ENCODE measurements at regions of chr12 and their contacts with region 1.

Region 1: GRCh38 chr12:110124184-110124995 is at the start of gene IFT81:
- DNase-seq: peak; percentile 96
- ATAC-seq: peak; percentile 94
- H3K4me3 ChIP-seq: peak within 1 kb of the TSS; percentile 75 to 98 (median 96)
- H3K4me3 Mint-ChIP-seq: peak within 1 kb of the TSS; percentile 94
- H3K27ac ChIP-seq: peak within 1 kb of the TSS; percentile 25 to 92
- H3K27ac Mint-ChIP-seq: peak within 1 kb of the TSS; percentile 92
- H3K4me1 ChIP-seq: peaks cover 7 to 8% of the 10 kb centered on the region in 2 donors
- H3K4me1 Mint-ChIP-seq: peaks cover 9% of the 10 kb centered on the region
- H3K27me3 ChIP-seq: no peaks in the 10 kb centered on the region
- H3K27me3 Mint-ChIP-seq: no peaks in the 10 kb centered on the region
- CTCF ChIP-seq: no peak
- total RNA-seq, gene IFT81: 6.0 and 6.8 TPM in 2 replicates

Region 2: DNA sequence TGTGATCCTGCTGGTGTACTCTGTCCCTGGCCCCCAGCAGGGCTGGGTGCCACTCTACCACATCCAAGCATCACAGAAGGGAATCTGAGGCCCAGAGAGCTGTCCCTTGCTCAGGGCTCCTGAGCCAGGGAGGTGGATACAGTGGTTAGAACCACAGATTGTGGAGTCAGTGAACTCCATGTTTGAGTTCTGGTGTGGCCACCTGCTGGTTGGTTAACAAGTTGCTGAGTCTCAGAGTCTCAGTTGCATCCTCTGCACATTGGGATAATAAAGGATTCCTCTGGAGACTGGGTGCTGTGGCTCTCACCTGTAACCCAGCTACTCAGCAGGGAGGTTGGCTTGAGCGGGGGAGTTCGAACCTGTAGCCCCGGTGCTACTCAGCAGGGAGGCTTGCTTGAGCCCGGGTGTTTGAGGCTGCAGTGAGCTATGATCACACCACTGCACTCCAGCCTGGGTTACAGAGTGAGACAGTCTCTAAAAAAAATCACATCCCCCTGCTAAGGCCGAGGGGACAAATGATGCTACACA is 511.4 kb before region 1 on chr12:
- CTCF ChIA-PET with region 1: no interaction called
- POLR2A ChIA-PET with region 1: no interaction called
- intact Hi-C with region 1: no loop called
- DNase-seq: no peak
- ATAC-seq: no peak
- H3K4me3 ChIP-seq: no peak overlapping the region
- H3K4me3 Mint-ChIP-seq: no peak overlapping the region
- H3K27ac ChIP-seq: no peak overlapping the region
- H3K27ac Mint-ChIP-seq: no peak overlapping the region
- H3K4me1 ChIP-seq: no peaks in the 10 kb centered on the region
- H3K4me1 Mint-ChIP-seq: no peaks in the 10 kb centered on the region
- H3K27me3 ChIP-seq: peaks cover 0 to 17% (median 3%) of the 10 kb centered on the region in 4 experiments
- H3K27me3 Mint-ChIP-seq: peaks cover 47% of the 10 kb centered on the region
- CTCF ChIP-seq: no peak

Region 3: GRCh38 chr12:110079477-110080400 is 44.7 kb before region 1 on chr12:
- CTCF ChIA-PET with region 1: no interaction called
- POLR2A ChIA-PET with region 1: interaction called, 4 read pairs
- intact Hi-C with region 1: loop called (anchors 1 kb)
- DNase-seq: peak; percentile 88
- ATAC-seq: peak; percentile 95
- H3K4me3 ChIP-seq: peak overlapping the region; percentile 47 to 60 (median 48)
- H3K4me3 Mint-ChIP-seq: peak overlapping the region; percentile 87
- H3K27ac ChIP-seq: peak overlapping the region; percentile 87 to 90
- H3K27ac Mint-ChIP-seq: peak overlapping the region; percentile 98
- H3K4me1 ChIP-seq: peaks cover 19 to 23% of the 10 kb centered on the region in 2 donors
- H3K4me1 Mint-ChIP-seq: peaks cover 18% of the 10 kb centered on the region
- H3K27me3 ChIP-seq: no peaks in the 10 kb centered on the region
- H3K27me3 Mint-ChIP-seq: no peaks in the 10 kb centered on the region
- CTCF ChIP-seq: no peak

Region 4: GRCh38 chr12:110100315-110100970 is 23.9 kb before region 1 on chr12:
- CTCF ChIA-PET with region 1: interaction called, 5 read pairs
- POLR2A ChIA-PET with region 1: no interaction called
- intact Hi-C with region 1: loop called (anchors 1 kb)
- DNase-seq: peak; percentile 91
- ATAC-seq: peak; percentile 98
- H3K4me3 ChIP-seq: peak overlapping the region in 2 of 5 experiments; percentile 15 to 21
- H3K4me3 Mint-ChIP-seq: peak overlapping the region; percentile 67
- H3K27ac ChIP-seq: peak overlapping the region; percentile 72 to 73
- H3K27ac Mint-ChIP-seq: peak overlapping the region; percentile 81
- H3K4me1 ChIP-seq: peaks cover 21 to 22% of the 10 kb centered on the region in 2 donors
- H3K4me1 Mint-ChIP-seq: peaks cover 24% of the 10 kb centered on the region
- H3K27me3 ChIP-seq: no peaks in the 10 kb centered on the region
- H3K27me3 Mint-ChIP-seq: no peaks in the 10 kb centered on the region
- CTCF ChIP-seq: peak; percentile 93

Region 5: DNA sequence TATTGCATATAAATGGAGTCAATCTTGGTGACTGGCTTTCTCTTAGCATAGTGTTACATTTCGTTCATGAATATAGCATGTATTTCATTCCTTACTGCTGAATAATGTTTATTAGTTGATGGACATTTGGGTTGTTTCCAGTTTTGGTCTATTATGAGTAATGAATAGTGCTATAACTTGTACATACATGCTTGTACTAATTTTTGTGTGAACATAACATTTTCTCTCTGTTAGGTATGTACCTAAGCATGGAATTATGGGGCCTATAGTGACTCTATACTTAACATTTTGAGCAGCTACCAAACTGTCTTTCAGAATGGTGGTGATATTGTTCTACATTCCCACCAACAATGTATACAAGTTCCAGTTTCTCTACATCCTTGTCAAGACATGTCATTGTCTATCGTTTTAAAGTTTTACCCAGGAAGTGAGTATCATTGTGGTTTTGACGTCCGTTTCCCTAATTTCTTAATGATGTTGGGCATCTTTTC is 179.7 kb after region 1 on chr12:
- CTCF ChIA-PET with region 1: no interaction called
- POLR2A ChIA-PET with region 1: no interaction called
- intact Hi-C with region 1: no loop called
- DNase-seq: no peak
- ATAC-seq: no peak
- H3K4me3 ChIP-seq: no peak overlapping the region
- H3K4me3 Mint-ChIP-seq: no peak overlapping the region
- H3K27ac ChIP-seq: no peak overlapping the region
- H3K27ac Mint-ChIP-seq: no peak overlapping the region
- H3K4me1 ChIP-seq: peaks cover 7 to 9% of the 10 kb centered on the region in 2 donors
- H3K4me1 Mint-ChIP-seq: peaks cover 25% of the 10 kb centered on the region
- H3K27me3 ChIP-seq: no peaks in the 10 kb centered on the region
- H3K27me3 Mint-ChIP-seq: no peaks in the 10 kb centered on the region
- CTCF ChIP-seq: no peak

Region 6: GRCh38 chr12:110403146-110403975 is 279.0 kb after region 1 on chr12 and contains the start of gene ANAPC7:
- CTCF ChIA-PET with region 1: no interaction called
- POLR2A ChIA-PET with region 1: no interaction called
- intact Hi-C with region 1: loop called (anchors 1 kb)
- DNase-seq: peak; percentile 92
- ATAC-seq: peak; percentile 93
- H3K4me3 ChIP-seq: peak within 1 kb of the TSS; percentile 85 to 100 (median 98)
- H3K4me3 Mint-ChIP-seq: peak within 1 kb of the TSS; percentile 99
- H3K27ac ChIP-seq: peak within 1 kb of the TSS; percentile 83 to 89
- H3K27ac Mint-ChIP-seq: peak within 1 kb of the TSS; percentile 99
- H3K4me1 ChIP-seq: peaks cover 13 to 18% of the 10 kb centered on the region in 2 donors
- H3K4me1 Mint-ChIP-seq: peaks cover 34% of the 10 kb centered on the region
- H3K27me3 ChIP-seq: no peaks in the 10 kb centered on the region
- H3K27me3 Mint-ChIP-seq: peaks cover 1% of the 10 kb centered on the region
- CTCF ChIP-seq: no peak
- total RNA-seq, gene ANAPC7: 68.4 and 68.8 TPM in 2 replicates

Region 7: DNA sequence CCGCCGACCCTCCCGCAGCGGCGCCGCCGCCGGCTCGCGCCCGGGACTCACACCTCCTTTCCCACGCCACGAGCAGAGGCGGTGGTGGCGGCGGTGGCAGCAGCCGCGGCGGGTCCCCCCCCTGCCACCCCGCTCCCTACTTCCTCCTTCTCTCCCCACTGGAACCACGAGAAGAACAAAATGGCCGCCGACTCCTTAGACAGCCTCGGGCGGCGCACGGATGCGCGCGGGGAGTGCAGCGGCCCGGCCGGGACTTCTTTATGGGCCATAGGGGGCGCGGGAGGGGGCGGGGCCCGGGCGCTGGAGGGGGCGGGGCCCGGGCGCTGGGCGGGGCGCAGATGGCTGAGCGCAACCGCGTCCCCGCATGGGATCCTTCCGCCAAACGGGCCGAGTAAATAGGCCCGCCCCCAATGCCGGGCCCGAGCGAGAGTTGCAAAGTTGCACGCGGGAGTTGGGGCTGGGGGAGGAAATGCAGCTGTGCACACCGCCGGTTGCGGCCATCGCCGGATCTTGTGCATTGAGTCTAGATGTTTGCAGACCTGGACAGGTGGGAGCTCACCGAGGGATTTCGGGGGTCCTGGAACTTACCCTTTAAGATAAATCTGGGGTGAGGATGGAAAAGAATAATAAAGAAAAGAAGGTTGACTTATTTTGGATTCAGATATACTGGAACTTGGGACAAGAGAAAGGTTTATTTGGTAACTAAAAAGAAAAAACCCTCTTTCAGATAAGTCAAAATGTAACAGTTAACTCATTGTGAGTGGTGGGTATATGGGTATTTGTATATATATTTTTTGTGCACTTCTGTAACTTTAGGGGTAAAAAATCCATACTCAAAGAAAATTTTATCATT is 618.6 kb after region 1 on chr12 and contains the start of gene PPP1CC:
- CTCF ChIA-PET with region 1: no interaction called
- POLR2A ChIA-PET with region 1: no interaction called
- intact Hi-C with region 1: loop called (anchors 2 kb)
- DNase-seq: peak; percentile 97
- ATAC-seq: peak; percentile 95
- H3K4me3 ChIP-seq: peak within 1 kb of the TSS; percentile 86 to 94 (median 92)
- H3K4me3 Mint-ChIP-seq: peak within 1 kb of the TSS; percentile 99
- H3K27ac ChIP-seq: peak within 1 kb of the TSS; percentile 31 to 78
- H3K27ac Mint-ChIP-seq: peak within 1 kb of the TSS; percentile 95
- H3K4me1 ChIP-seq: peaks cover 32 to 36% of the 10 kb centered on the region in 2 donors
- H3K4me1 Mint-ChIP-seq: peaks cover 40% of the 10 kb centered on the region
- H3K27me3 ChIP-seq: no peaks in the 10 kb centered on the region
- H3K27me3 Mint-ChIP-seq: no peaks in the 10 kb centered on the region
- CTCF ChIP-seq: no peak
- total RNA-seq, gene PPP1CC: 146 and 150 TPM in 2 replicates